ENCODE measurements at regions of chr2 and their contacts with region 1.

Region 1: DNA sequence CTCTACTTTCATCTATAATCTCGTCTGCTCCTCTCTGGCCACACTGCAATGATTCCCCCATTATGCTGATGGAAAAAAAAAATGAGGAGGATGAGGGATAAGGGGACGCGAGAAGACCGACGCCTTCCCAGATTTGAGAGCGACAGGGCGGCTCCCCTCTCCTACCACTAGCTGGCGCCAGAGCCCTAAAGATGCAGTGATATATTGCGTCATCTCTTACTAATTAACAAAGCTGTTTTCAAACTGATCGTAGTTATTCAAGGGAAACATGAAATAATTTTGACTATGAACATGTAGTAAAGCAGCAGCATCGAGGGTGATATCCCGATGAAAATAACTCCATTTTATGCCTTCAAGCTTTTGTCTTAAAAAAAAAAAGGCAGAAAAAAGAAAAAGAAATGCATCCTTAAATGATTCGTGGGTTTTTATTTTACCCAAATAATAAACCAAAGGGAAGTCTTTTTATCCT is 48.0 kb upstream of the HNRNPA3 start:
- H3K4me3 ChIP-seq: peak overlapping the region; percentile 0; the same call in 1 of the 2 replicates
- H3K27ac ChIP-seq: no peak overlapping the region
- H3K4me1 ChIP-seq: peaks cover 9% of the 10 kb centered on the region
- CTCF ChIP-seq: peak; percentile 96

Region 2: DNA sequence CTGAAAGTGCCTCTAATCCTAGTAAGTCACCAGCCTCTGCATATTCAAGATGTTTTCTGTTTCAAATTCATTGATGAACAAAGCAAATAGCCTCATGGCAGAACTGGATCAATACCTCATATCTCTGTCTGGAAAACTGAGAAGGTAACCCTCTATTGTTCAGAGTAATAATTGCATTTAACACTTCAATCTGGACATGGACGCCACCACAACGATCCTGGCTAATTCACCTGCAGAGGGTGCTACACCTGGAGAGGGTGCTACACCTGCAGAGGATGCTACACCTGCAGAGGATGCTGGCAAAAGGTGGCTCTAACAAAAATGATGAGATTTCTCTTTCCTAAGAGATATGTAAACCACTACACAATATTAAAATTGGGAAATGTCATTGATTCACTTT is 135.1 kb before region 1 on chr2:
- CTCF ChIA-PET with region 1: no interaction called
- POLR2A ChIA-PET with region 1: no interaction called
- H3K4me3 ChIP-seq: no peak overlapping the region
- H3K27ac ChIP-seq: no peak overlapping the region
- H3K4me1 ChIP-seq: peaks cover 17% of the 10 kb centered on the region
- CTCF ChIP-seq: no peak

Region 3: DNA sequence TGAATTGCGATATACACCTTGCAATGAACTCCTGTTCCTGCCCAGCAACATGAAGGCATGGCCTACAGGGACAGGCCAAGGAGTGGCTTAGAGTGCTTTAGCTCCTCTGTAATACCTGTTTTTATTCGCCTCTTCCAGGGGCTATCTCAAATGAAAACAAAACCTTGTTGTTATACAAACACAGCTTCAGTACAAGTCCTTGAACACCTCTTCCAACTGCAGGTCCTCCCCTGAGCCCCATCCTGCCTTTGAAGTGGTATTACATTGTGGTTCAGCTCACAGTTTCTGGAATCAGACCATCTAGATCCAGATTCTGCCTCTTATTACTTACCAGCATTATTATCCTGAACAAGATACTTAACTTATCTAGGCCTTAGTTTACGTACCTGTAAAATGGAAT is 35.0 kb before region 1 on chr2:
- CTCF ChIA-PET with region 1: no interaction called
- POLR2A ChIA-PET with region 1: no interaction called
- H3K4me3 ChIP-seq: no peak overlapping the region
- H3K27ac ChIP-seq: no peak overlapping the region
- H3K4me1 ChIP-seq: no peaks in the 10 kb centered on the region
- CTCF ChIP-seq: no peak

Region 4: GRCh38 chr2:177201919-177202346 is 37.3 kb after region 1 on chr2:
- CTCF ChIA-PET with region 1: interaction called, 59 read pairs
- POLR2A ChIA-PET with region 1: no interaction called
- H3K4me3 ChIP-seq: no peak overlapping the region
- H3K27ac ChIP-seq: no peak overlapping the region
- H3K4me1 ChIP-seq: no peaks in the 10 kb centered on the region
- CTCF ChIP-seq: no peak

Region 5: GRCh38 chr2:177263451-177264208 is 99.0 kb after region 1 on chr2:
- CTCF ChIA-PET with region 1: interaction called, 17 read pairs
- POLR2A ChIA-PET with region 1: interaction called, 9 read pairs
- H3K4me3 ChIP-seq: peak overlapping the region; percentile 95
- H3K27ac ChIP-seq: peak overlapping the region; percentile 96
- H3K4me1 ChIP-seq: peaks cover 12% of the 10 kb centered on the region
- CTCF ChIP-seq: peak; percentile 99

Region 6: DNA sequence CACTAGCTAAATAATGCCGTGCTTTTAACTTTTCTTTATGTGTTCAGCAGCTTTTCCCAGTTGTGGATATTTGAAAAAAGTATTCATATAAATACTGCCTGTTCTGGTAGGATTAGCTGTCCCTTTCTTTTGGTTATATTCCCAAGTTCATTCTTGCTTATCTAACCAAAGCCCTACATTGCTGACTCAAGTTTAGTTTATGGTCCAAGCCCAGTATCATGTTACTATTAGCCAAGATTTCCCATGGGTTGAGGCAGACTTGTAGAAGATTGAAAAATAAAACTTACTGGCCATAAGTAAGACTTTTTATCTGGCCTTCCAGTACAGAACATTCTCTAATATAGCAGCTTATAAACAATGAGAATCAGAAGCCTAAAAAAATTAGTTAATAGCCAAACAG is 149.6 kb after region 1 on chr2:
- CTCF ChIA-PET with region 1: interaction called, 10 read pairs
- POLR2A ChIA-PET with region 1: no interaction called
- H3K4me3 ChIP-seq: no peak overlapping the region
- H3K27ac ChIP-seq: no peak overlapping the region
- H3K4me1 ChIP-seq: peaks cover 8% of the 10 kb centered on the region
- CTCF ChIP-seq: no peak

Region 7: DNA sequence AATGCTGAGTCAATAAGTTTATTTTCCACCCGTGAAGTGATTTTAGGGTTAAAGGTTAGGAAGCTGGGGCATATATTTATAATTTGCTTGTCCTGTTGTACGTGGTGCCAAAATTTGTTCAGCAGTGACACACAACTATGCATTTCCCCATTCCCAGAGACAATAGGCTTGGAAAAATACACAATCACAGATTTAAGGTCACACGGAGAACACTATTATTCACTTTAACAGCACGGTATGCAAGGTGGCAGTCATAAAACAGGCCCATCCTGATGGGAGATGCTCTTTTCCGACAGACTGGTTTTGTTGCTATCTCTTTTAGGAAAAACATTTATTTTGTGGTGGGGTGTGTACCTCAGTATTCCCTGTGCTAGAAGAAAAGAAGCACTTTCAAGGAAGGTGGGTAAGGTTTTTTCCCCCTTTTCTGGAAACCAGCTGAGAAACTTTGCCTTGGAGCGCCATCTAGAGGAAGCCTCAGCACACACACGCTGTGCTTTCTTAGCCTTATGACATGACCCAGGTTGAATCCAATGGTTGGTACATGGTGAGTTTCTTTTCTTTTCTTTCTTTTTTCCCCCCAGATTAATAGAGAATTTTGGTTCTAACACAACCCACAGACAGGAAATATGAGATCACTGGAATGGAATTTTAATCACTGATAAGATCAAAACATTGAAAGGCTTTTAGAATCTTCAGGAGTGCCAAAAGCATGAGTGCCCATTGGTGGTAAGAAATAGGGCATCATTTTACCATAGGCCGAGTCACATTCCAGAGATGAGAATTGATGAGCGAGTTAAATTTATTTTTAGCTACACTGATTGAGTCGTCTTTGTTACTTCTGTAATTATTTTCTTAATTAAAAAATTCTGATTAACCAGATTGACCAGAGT is 560.0 kb after region 1 on chr2:
- CTCF ChIA-PET with region 1: interaction called, 19 read pairs
- POLR2A ChIA-PET with region 1: no interaction called
- H3K4me3 ChIP-seq: no peak overlapping the region
- H3K27ac ChIP-seq: no peak overlapping the region
- H3K4me1 ChIP-seq: no peaks in the 10 kb centered on the region; the same call in 1 of the 2 replicates
- CTCF ChIP-seq: peak; percentile 77

Measured in HEK293 (cell line).